ENCODE measurements at regions of chr2 and their contacts with region 1.

Region 1: DNA sequence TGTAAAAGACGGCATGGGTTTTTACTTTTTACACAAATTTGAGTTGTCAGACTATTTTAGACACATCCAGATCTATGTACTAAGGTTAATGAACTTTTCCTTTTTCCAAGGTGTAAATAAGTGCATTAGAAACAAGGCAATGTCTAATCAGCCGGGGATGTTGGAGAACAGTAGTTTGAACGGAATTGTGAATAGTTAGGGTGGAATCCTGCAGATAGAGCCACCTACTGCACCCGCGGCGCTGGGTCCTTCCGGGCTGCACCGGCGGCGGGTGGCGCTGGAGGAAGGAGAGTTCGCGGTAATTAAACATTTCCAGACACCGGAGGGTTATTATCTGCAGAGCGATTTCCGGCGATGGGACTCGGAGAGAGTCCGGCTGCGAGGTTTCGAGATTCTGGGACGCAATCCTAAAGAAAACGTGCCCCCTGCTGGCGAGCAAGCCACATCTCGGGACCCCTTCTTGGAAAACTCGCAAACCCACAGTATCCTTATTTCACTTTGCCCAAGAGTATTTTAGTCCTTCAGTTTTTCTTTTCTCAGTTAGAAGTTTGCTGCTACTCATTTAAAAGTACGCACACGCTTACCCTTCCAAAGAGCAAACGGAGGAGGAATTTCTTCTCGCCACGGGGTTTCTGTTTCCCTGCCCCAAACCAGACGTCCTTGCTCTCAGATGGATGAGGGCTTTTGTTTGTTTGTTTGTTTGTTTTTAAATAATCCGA is 4.5 kb upstream of the OSR1 start:
- DNase-seq: peak; percentile 52 to 58
- ATAC-seq: peak; percentile 59 to 78
- H3K4me3 ChIP-seq: peak overlapping the region; percentile 58 to 92 (median 62)
- H3K27ac ChIP-seq: peak overlapping the region in 1 of 4 donors; percentile 8
- H3K4me1 ChIP-seq: peaks cover 6 to 30% of the 10 kb centered on the region in 2 donors
- H3K27me3 ChIP-seq: peaks cover 0 to 27% (median 13%) of the 10 kb centered on the region in 3 donors
- CTCF ChIP-seq: peak; percentile 47 to 84 (median 76)
- POLR2A ChIP-seq: no peak

Region 2: GRCh38 chr2:18387441-18388206 is 975.3 kb before region 1 on chr2:
- in situ Hi-C with region 1: loop called in 2 of 4 experiments (anchors 25 kb)
- intact Hi-C with region 1: loop called (anchors 2 kb)
- DNase-seq: peak; percentile 44 to 61
- ATAC-seq: peak; percentile 93 to 94
- H3K4me3 ChIP-seq: no peak overlapping the region
- H3K27ac ChIP-seq: no peak overlapping the region
- H3K4me1 ChIP-seq: no peaks in the 10 kb centered on the region
- H3K27me3 ChIP-seq: no peaks in the 10 kb centered on the region
- CTCF ChIP-seq: peak; percentile 72 to 94 (median 87)
- POLR2A ChIP-seq: no peak

Region 3: DNA sequence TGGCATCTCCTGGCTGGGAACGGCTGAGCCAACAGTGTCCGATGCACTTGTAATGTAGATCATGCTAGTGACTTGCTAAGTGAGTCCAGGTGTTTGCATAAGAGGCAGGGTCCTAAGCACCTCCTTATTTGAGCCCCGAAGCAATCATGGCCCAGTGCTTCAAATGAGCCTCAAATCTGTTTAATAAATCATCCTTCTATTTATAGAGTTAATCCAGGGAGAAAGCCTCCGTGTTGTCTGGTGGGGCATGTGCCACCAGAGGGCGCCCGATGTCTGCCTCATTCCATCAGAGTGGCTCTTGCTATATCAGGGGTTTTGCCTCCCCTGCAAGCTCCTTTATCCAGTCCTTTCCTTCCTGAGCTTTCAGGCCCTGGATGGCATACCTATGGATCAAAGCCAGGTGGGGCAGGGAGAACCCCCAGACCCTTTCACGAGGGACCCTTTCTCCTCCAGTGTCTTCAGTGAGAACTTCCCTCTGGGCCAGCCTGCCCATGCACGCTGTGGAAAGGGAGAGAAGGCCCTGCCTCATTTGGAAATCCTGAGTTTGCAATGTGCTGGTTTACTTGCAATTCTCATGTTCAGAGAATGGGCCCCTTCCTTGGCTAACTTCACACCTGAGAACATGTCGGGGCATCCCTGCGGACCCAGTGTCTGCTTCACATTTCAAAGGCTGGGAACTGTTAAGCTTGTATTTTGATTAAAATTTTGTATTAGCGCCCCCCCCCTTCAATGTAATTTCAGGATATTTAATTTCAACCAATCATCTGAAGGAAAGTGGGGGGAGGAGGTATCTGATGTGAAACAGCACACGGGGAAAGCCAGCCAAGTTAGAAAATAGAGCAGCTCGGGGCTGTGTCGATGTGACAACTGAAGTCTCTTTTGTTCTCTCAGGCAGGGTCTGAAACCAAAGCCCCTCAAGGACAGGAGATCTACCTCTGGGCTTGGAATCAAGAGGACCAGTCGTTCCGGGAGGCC is 842.2 kb before region 1 on chr2:
- in situ Hi-C with region 1: loop called (anchors 25 kb)
- intact Hi-C with region 1: loop called (anchors 5 kb)
- DNase-seq: peak; percentile 49 to 81
- ATAC-seq: peak; percentile 85 to 96
- H3K4me3 ChIP-seq: peak overlapping the region in 2 of 4 donors; percentile 4 to 26
- H3K27ac ChIP-seq: peak overlapping the region; percentile 13 to 52 (median 38)
- H3K4me1 ChIP-seq: peaks cover 14 to 39% of the 10 kb centered on the region in 2 donors
- H3K27me3 ChIP-seq: no peaks in the 10 kb centered on the region
- CTCF ChIP-seq: peak; percentile 76 to 90 (median 88)
- POLR2A ChIP-seq: no peak

Region 4: DNA sequence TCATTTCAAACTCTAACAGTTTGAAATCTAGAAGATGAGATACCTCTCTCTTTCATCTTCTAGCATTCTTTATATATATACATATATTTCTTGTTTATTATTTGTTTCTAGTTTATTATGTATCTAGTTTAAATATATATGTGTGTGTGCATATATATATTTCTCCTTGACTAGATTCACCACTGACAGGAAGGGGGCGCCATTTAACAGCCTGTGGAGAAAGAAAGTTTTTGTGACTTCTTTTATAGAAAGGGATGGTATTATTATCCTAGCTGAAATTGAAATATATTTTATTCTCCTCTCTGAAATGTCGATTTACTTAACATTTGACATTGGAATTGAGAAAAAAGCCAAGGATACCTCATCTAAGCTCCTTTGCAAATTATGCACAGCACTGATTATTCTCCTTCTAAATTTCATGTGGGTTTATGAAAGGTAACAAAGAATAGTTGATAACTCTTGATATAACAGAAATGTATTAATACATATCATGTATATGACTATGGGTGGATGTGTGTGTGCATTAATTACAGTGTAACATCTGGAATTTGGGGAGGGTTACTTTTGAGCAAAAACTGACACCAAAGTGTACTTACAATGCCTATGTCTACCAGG is 612.9 kb before region 1 on chr2:
- in situ Hi-C with region 1: loop called (anchors 10 to 25 kb)
- intact Hi-C with region 1: loop called (anchors 1 kb)
- DNase-seq: no peak
- ATAC-seq: peak; percentile 41 to 69
- H3K4me3 ChIP-seq: no peak overlapping the region
- H3K27ac ChIP-seq: peak overlapping the region in 3 of 4 donors; percentile 17 to 47 (median 28)
- H3K4me1 ChIP-seq: peaks cover 26 to 34% of the 10 kb centered on the region in 2 donors
- H3K27me3 ChIP-seq: no peaks in the 10 kb centered on the region
- CTCF ChIP-seq: peak; percentile 60 to 78 (median 73)
- POLR2A ChIP-seq: no peak

Region 5: GRCh38 chr2:18987592-18988073 is 375.3 kb before region 1 on chr2:
- in situ Hi-C with region 1: loop called in 3 of 4 experiments (anchors 10 to 25 kb)
- intact Hi-C with region 1: loop called (anchors 2 kb)
- DNase-seq: peak; percentile 58 to 66
- ATAC-seq: peak; percentile 60 to 85
- H3K4me3 ChIP-seq: no peak overlapping the region
- H3K27ac ChIP-seq: no peak overlapping the region
- H3K4me1 ChIP-seq: peaks cover 5 to 14% of the 10 kb centered on the region in 2 donors
- H3K27me3 ChIP-seq: no peaks in the 10 kb centered on the region
- CTCF ChIP-seq: peak in 2 of 5 experiments; percentile 33 to 42
- POLR2A ChIP-seq: no peak

Region 6: GRCh38 chr2:19851116-19851695 is 488.3 kb after region 1 on chr2:
- in situ Hi-C with region 1: loop called in 1 of 4 experiments (anchors 10 kb)
- intact Hi-C with region 1: no loop called
- DNase-seq: no peak
- ATAC-seq: no peak
- H3K4me3 ChIP-seq: no peak overlapping the region
- H3K27ac ChIP-seq: no peak overlapping the region
- H3K4me1 ChIP-seq: peaks cover 8 to 13% of the 10 kb centered on the region in 2 donors
- H3K27me3 ChIP-seq: no peaks in the 10 kb centered on the region
- CTCF ChIP-seq: no peak
- POLR2A ChIP-seq: no peak

Measured in gastrocnemius medialis (tissue), 4 donors.